Activated CD8-positive, alpha-beta T cell treated with anti-CD3 and anti-CD28 coated beads for 36 hours (primary cell): ENCODE measurements at regions of chr3 and their contacts with region 1.

Region 1: GRCh38 chr3:108914774-108915641 is 38.7 kb downstream of the GUCA1C start:
- DNase-seq: peak; percentile 74
- ATAC-seq: peak; percentile 95
- H3K4me3 Mint-ChIP-seq: no peak overlapping the region
- H3K27ac Mint-ChIP-seq: peak overlapping the region; percentile 23
- H3K4me1 Mint-ChIP-seq: peaks cover 10% of the 10 kb centered on the region
- H3K27me3 Mint-ChIP-seq: peaks cover 4% of the 10 kb centered on the region
- CTCF ChIP-seq: peak; percentile 99

Region 2: DNA sequence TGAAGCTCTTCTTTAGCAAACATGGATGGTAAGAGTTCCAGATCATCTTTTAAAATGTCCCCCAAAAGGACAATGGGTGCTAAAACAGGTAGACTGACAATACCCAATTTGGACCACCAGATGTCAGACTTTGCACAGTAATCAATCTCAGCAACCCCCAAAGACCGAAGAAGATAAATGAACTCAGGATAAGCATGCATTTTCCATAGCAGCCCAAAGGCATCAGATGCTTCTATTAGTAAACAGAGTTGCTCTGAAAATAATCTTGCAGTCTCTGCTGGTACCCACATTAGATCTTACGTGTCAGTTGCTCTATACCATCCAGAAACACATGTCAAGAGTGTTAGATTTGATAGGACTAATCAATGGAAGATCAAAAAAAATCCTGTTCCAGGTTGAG is 425.2 kb before region 1 on chr3:
- CTCF ChIA-PET with region 1: interaction called, 16 read pairs
- POLR2A ChIA-PET with region 1: no interaction called
- intact Hi-C with region 1: loop called (anchors 10 kb)
- DNase-seq: peak; percentile 56
- ATAC-seq: peak; percentile 79
- H3K4me3 Mint-ChIP-seq: no peak overlapping the region
- H3K27ac Mint-ChIP-seq: no peak overlapping the region
- H3K4me1 Mint-ChIP-seq: peaks cover 4% of the 10 kb centered on the region
- H3K27me3 Mint-ChIP-seq: no peaks in the 10 kb centered on the region
- CTCF ChIP-seq: peak; percentile 84

Region 3: DNA sequence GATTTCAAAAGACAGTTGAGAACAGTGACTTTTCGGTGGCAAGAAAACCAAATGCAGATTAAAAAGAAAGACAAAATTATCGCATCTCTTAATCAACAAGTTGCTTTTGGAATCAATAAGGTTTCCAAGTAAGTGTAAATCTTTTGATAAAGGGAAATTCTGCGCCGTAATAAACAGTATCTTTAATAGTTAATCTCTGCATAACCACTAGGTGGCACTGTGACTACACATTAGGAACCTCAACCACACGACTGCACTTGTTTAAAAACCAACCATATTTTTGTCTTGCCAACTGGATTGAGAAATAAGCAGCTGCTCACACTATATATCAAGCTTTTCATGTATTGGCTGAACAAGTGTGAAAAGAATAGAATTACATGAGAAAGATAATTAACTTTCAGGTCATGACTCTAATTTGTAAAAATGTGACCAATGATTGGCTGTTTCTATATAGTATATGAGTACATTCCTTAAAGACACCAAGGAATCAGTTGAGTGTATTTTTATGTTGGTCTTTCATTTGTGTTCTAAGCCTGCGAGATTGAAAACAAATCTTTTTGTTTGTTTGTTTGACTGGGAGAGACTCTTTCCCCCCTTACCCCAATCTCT is 252.8 kb before region 1 on chr3:
- CTCF ChIA-PET with region 1: interaction called, 103 read pairs
- POLR2A ChIA-PET with region 1: interaction called, 3 read pairs
- intact Hi-C with region 1: loop called (anchors 1 kb)
- DNase-seq: peak; percentile 17
- ATAC-seq: peak; percentile 61
- H3K4me3 Mint-ChIP-seq: no peak overlapping the region
- H3K27ac Mint-ChIP-seq: no peak overlapping the region
- H3K4me1 Mint-ChIP-seq: peaks cover 8% of the 10 kb centered on the region
- H3K27me3 Mint-ChIP-seq: no peaks in the 10 kb centered on the region
- CTCF ChIP-seq: peak; percentile 85

Region 4: DNA sequence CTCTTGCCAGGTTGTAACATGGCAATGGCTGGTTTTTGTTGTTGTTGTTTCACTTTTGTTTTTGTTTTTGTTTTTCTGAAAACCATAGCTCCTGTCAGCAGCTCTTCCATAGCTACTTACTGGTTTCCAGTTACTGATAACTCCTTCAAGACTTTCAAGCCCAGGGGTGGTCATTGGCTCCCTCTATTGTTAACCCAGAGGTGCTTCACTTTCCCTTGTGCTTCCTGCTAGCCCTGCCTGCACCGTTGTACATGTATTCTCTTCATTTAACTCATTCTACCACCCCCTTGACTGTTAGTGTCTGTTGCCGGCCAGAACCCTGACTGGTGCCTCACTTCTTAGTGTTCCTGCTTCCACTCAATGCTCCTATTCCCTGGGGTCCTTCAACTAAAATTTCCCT is 96.6 kb before region 1 on chr3:
- CTCF ChIA-PET with region 1: interaction called, 113 read pairs
- POLR2A ChIA-PET with region 1: interaction called, 4 read pairs
- intact Hi-C with region 1: loop called (anchors 2 kb)
- DNase-seq: peak; percentile 74
- ATAC-seq: peak; percentile 89
- H3K4me3 Mint-ChIP-seq: no peak overlapping the region
- H3K27ac Mint-ChIP-seq: peak overlapping the region; percentile 31
- H3K4me1 Mint-ChIP-seq: peaks cover 24% of the 10 kb centered on the region
- H3K27me3 Mint-ChIP-seq: no peaks in the 10 kb centered on the region
- CTCF ChIP-seq: peak; percentile 78

Region 5: GRCh38 chr3:108887121-108887520 is 27.9 kb before region 1 on chr3:
- CTCF ChIA-PET with region 1: interaction called, 12 read pairs
- POLR2A ChIA-PET with region 1: no interaction called
- intact Hi-C with region 1: no loop called
- DNase-seq: no peak
- ATAC-seq: no peak
- H3K4me3 Mint-ChIP-seq: no peak overlapping the region
- H3K27ac Mint-ChIP-seq: no peak overlapping the region
- H3K4me1 Mint-ChIP-seq: peaks cover 14% of the 10 kb centered on the region
- H3K27me3 Mint-ChIP-seq: no peaks in the 10 kb centered on the region
- CTCF ChIP-seq: no peak

Region 6: GRCh38 chr3:108931035-108931434 is 16.0 kb after region 1 on chr3:
- CTCF ChIA-PET with region 1: interaction called, 13 read pairs
- POLR2A ChIA-PET with region 1: interaction called, 4 read pairs
- intact Hi-C with region 1: no loop called
- DNase-seq: no peak
- ATAC-seq: no peak
- H3K4me3 Mint-ChIP-seq: no peak overlapping the region
- H3K27ac Mint-ChIP-seq: no peak overlapping the region
- H3K4me1 Mint-ChIP-seq: no peaks in the 10 kb centered on the region
- H3K27me3 Mint-ChIP-seq: peaks cover 2% of the 10 kb centered on the region
- CTCF ChIP-seq: no peak

Region 7: GRCh38 chr3:109275702-109276293 is 360.8 kb after region 1 on chr3:
- CTCF ChIA-PET with region 1: no interaction called
- POLR2A ChIA-PET with region 1: no interaction called
- intact Hi-C with region 1: no loop called
- DNase-seq: peak; percentile 39
- ATAC-seq: no peak
- H3K4me3 Mint-ChIP-seq: no peak overlapping the region
- H3K27ac Mint-ChIP-seq: no peak overlapping the region
- H3K4me1 Mint-ChIP-seq: no peaks in the 10 kb centered on the region
- H3K27me3 Mint-ChIP-seq: no peaks in the 10 kb centered on the region
- CTCF ChIP-seq: peak; percentile 65

Region 8: GRCh38 chr3:109825971-109826810 is 911.2 kb after region 1 on chr3:
- CTCF ChIA-PET with region 1: no interaction called
- POLR2A ChIA-PET with region 1: no interaction called
- intact Hi-C with region 1: no loop called
- DNase-seq: no peak
- ATAC-seq: no peak
- H3K4me3 Mint-ChIP-seq: no peak overlapping the region
- H3K27ac Mint-ChIP-seq: no peak overlapping the region
- H3K4me1 Mint-ChIP-seq: no peaks in the 10 kb centered on the region
- H3K27me3 Mint-ChIP-seq: no peaks in the 10 kb centered on the region
- CTCF ChIP-seq: no peak